ENCODE measurements at regions of chr22 and their contacts with region 1.

Region 1: DNA sequence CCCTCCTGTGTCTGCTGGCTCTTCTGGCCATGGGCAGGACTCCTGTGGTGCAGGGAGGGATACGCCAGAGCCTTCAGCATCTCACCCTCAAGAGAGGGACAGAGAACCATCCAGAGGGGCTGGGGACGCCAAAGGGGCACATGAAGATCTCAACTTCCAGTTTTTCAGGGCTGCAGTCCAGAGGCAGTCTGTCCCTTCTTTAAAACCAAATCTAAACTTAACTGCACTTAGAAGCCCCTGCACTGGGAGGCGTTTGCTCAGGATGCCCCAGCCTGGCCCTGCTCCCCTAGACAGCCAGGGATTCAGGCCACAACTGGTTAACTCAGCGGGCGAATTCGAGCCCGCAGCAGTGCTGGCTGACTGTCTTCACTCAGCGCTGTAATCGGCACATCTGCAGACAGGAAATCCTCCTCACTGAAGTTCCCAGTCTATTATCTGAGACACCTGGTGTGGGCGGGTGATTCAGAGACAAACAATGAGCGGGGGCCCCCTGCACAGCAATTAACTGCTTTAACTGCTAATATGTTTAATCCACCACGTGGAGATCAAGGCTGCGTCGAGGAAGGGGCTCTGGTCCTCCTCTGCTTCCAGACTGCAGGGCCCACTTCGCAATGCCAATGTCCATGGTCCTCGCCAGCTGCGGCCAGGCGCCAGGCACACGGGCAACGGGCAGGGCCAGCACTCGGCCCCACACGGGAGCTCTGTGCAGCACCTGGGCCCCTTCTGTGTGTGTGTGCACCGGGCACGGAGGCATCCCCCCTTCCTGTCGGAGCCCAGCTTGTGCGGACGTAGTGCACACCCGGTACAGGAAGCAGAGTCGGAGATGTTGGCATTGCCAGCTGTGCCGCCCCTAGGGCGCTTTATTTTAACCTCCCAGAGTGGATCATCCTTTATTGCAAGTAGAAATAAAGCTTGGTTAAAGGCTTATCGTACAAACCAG is 36.9 kb upstream of the GNB1L start:
- DNase-seq: peak; percentile 66 to 89 (median 82)
- ATAC-seq: peak; percentile 77
- H3K4me3 ChIP-seq: peak overlapping the region; percentile 45 to 55
- H3K4me3 Mint-ChIP-seq: peak overlapping the region; percentile 85
- H3K27ac ChIP-seq: peak overlapping the region; percentile 72 to 82
- H3K27ac Mint-ChIP-seq: peak overlapping the region; percentile 99
- H3K4me1 ChIP-seq: peaks cover 88% of the 10 kb centered on the region
- H3K4me1 Mint-ChIP-seq: peaks cover 90% of the 10 kb centered on the region
- H3K27me3 ChIP-seq: no peaks in the 10 kb centered on the region
- H3K27me3 Mint-ChIP-seq: no peaks in the 10 kb centered on the region
- CTCF ChIP-seq: no peak

Region 2: DNA sequence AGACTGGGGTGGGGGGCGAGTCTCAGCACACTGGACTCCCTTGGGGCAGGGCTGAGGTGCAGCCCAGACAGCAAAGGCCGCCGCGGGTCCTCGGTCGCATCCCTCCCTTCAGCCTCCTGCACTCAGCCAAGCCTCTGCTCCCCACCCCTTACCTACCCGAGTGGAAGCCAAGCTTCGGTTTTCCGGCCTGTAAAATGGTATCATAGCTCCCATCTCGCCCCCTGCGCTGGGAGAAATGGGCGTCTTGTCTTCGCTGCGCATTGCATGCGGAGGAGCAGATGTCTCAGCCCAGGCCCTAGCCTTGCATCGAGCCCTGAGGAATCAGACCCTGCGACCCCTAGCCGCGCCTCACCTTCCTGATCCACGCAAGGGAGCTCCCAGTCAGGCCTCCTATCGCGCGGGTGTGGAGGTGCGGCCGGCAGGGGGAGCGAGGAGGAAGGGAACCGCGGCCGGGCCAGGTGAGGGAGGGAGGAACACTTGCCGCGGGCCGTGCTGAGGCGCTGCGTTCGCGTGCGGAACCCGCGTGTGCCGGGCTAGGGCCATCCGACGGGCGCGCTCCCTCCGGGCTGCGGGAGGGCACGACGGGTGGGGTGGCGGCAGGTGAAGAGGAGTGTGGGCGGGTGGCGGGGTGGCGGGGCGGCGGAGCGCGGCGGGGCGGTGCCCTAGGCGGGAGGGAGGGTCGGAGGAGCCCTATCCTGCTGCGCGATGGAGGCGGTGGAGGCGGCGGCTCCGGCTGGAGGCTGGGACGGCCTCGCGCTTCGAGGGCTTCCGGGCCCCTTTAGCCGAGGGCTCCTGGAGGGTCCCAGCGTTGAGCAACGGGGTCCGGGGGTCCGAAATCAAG is 135.1 kb before region 1 on chr22:
- CTCF ChIA-PET with region 1: interaction called, 10 read pairs
- POLR2A ChIA-PET with region 1: no interaction called
- intact Hi-C with region 1: loop called in 1 of 2 experiments (anchors 5 kb)
- DNase-seq: peak; percentile 37 to 82 (median 67)
- ATAC-seq: peak; percentile 72
- H3K4me3 ChIP-seq: peak overlapping the region; percentile 15 to 17
- H3K4me3 Mint-ChIP-seq: peak overlapping the region; percentile 74
- H3K27ac ChIP-seq: no peak overlapping the region
- H3K27ac Mint-ChIP-seq: no peak overlapping the region
- H3K4me1 ChIP-seq: peaks cover 26% of the 10 kb centered on the region
- H3K4me1 Mint-ChIP-seq: peaks cover 31% of the 10 kb centered on the region
- H3K27me3 ChIP-seq: peaks cover 24 to 38% of the 10 kb centered on the region in 2 experiments
- H3K27me3 Mint-ChIP-seq: peaks cover 49% of the 10 kb centered on the region
- CTCF ChIP-seq: peak; percentile 37

Region 3: GRCh38 chr22:19874307-19875060 is 17.1 kb before region 1 on chr22:
- CTCF ChIA-PET with region 1: interaction called, 6 read pairs
- POLR2A ChIA-PET with region 1: interaction called, 17 read pairs
- intact Hi-C with region 1: loop called in 1 of 2 experiments (anchors 2 kb)
- DNase-seq: peak in 7 of 9 experiments; percentile 16 to 67 (median 43)
- ATAC-seq: peak; percentile 92
- H3K4me3 ChIP-seq: peak overlapping the region in 1 of 2 experiments; percentile 8
- H3K4me3 Mint-ChIP-seq: peak overlapping the region; percentile 32
- H3K27ac ChIP-seq: no peak overlapping the region
- H3K27ac Mint-ChIP-seq: peak overlapping the region; percentile 82
- H3K4me1 ChIP-seq: peaks cover 31% of the 10 kb centered on the region
- H3K4me1 Mint-ChIP-seq: peaks cover 14% of the 10 kb centered on the region
- H3K27me3 ChIP-seq: no peaks in the 10 kb centered on the region
- H3K27me3 Mint-ChIP-seq: no peaks in the 10 kb centered on the region
- CTCF ChIP-seq: no peak

Region 4: GRCh38 chr22:19941365-19942082 is 49.9 kb after region 1 on chr22 and contains the starts of genes COMT and TXNRD2:
- CTCF ChIA-PET with region 1: no interaction called
- POLR2A ChIA-PET with region 1: no interaction called
- intact Hi-C with region 1: loop called in 1 of 2 experiments (anchors 1 kb)
- DNase-seq: peak; percentile 38 to 85 (median 73)
- ATAC-seq: peak; percentile 87
- H3K4me3 ChIP-seq: peak within 1 kb of the TSS; percentile 88 to 99
- H3K4me3 Mint-ChIP-seq: peak within 1 kb of the TSS; percentile 91
- H3K27ac ChIP-seq: peak within 1 kb of the TSS; percentile 66 to 71
- H3K27ac Mint-ChIP-seq: peak within 1 kb of the TSS; percentile 96
- H3K4me1 ChIP-seq: peaks cover 29% of the 10 kb centered on the region
- H3K4me1 Mint-ChIP-seq: peaks cover 36% of the 10 kb centered on the region
- H3K27me3 ChIP-seq: no peaks in the 10 kb centered on the region
- H3K27me3 Mint-ChIP-seq: no peaks in the 10 kb centered on the region
- CTCF ChIP-seq: no peak
- total RNA-seq, gene COMT: 10.5 to 11.0 TPM
- total RNA-seq, gene TXNRD2: 11.0 to 14.1 TPM

Region 5: GRCh38 chr22:19995626-19996335 is 104.2 kb after region 1 on chr22:
- CTCF ChIA-PET with region 1: no interaction called
- POLR2A ChIA-PET with region 1: no interaction called
- intact Hi-C with region 1: no loop called
- DNase-seq: peak in 1 of 9 experiments; percentile 3
- ATAC-seq: no peak
- H3K4me3 ChIP-seq: no peak overlapping the region
- H3K4me3 Mint-ChIP-seq: no peak overlapping the region
- H3K27ac ChIP-seq: no peak overlapping the region
- H3K27ac Mint-ChIP-seq: no peak overlapping the region
- H3K4me1 ChIP-seq: no peaks in the 10 kb centered on the region
- H3K4me1 Mint-ChIP-seq: no peaks in the 10 kb centered on the region
- H3K27me3 ChIP-seq: peaks cover 0 to 2% of the 10 kb centered on the region in 2 experiments
- H3K27me3 Mint-ChIP-seq: no peaks in the 10 kb centered on the region
- CTCF ChIP-seq: no peak